PC-9 (cell line): ENCODE measurements at regions of chr15 and their contacts with region 1.

Region 1: DNA sequence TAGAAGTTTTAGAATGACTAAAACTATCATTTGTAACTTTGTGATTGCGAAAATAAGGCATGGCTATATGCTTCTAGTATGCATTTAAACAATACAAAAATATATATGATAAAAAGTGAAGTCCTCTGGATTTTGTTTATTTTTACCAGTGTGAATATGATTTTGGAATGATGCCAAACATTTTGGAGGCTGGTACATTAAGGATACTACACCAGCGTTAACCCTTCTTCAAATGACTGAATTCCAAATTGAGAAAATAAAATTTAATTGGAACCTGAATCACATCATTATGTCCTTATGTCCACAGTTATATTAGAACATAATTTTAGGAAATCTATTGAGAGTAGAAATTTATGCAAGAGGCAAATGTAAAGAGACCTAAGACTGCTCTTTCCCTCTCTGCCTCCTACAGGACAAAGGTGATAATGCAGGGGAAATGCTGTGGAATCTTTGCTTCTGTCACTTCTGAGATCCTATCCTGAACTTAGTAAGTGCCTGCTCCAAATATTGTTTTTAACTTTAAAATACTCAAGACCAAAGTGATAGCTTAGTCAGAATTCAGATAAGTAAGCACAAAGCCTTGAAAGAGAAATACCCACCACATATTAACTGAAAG is 121.1 kb upstream of the NANOGP8 start:
- DNase-seq: no peak
- H3K4me3 ChIP-seq: no peak overlapping the region
- H3K27ac ChIP-seq: no peak overlapping the region
- H3K4me1 ChIP-seq: no peaks in the 10 kb centered on the region
- H3K27me3 ChIP-seq: no peaks in the 10 kb centered on the region
- CTCF ChIP-seq: peak; percentile 35; the same call in 1 of the 2 replicates

Region 2: DNA sequence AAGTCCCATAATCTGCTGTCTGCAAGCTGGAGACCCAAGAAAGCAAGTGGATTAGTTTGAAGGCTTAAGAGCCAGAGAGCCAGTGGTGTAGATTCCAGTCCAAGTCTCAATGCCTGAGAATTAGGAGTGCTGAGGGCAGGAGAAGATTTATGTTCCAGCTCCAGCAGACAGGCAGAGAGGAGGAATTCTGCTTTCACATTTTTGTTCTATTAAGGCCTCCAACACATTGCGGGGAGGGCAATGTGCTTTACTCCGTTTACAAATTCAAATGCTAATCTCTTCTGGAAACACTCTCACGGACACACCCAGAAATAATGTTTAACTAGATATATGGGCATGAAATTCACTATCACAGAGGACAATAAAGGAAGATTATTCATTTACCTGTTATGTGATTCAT is 285.8 kb after region 1 on chr15:
- CTCF ChIA-PET with region 1: no interaction called
- POLR2A ChIA-PET with region 1: no interaction called
- intact Hi-C with region 1: no loop called
- DNase-seq: no peak
- H3K4me3 ChIP-seq: no peak overlapping the region
- H3K27ac ChIP-seq: no peak overlapping the region
- H3K4me1 ChIP-seq: no peaks in the 10 kb centered on the region
- H3K27me3 ChIP-seq: no peaks in the 10 kb centered on the region
- CTCF ChIP-seq: no peak

Region 3: GRCh38 chr15:36029606-36030210 is 823.5 kb after region 1 on chr15:
- CTCF ChIA-PET with region 1: no interaction called
- POLR2A ChIA-PET with region 1: interaction called, 25 read pairs
- intact Hi-C with region 1: no loop called
- DNase-seq: no peak
- H3K4me3 ChIP-seq: no peak overlapping the region
- H3K27ac ChIP-seq: no peak overlapping the region
- H3K4me1 ChIP-seq: no peaks in the 10 kb centered on the region
- H3K27me3 ChIP-seq: no peaks in the 10 kb centered on the region
- CTCF ChIP-seq: no peak